GM12878 (cell line): ENCODE measurements at regions of chr6 and their contacts with region 1.

Region 1: DNA sequence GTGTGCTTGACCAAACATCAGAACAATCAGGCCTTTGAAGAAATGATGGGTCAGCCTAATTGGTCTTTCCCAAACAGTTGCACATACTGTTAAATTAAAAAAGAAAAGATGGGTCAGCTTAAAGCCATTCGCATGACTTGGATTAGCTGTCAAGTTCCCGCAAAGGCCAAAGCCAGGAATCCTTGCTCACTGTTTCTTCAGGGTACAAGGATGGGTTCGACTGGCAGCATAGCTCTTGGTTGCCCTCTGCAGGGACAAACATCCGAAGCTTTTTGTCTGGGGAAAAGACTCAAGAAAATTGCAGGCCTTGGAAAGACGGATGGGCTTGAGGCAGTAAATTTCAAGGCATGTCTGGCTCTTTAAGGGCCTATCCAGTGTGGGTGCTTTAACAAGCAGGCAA is 168.0 kb downstream of the HDGFL1 start:
- DNase-seq: peak; percentile 0
- ATAC-seq: no peak
- H3K4me3 ChIP-seq: no peak overlapping the region
- H3K27ac ChIP-seq: no peak overlapping the region
- H3K4me1 ChIP-seq: no peaks in the 10 kb centered on the region
- H3K27me3 ChIP-seq: no peaks in the 10 kb centered on the region
- CTCF ChIP-seq: peak; percentile 23 to 42 (median 40); a peak in 4 of 6 replicates
- EP300 ChIP-seq: no peak
- POLR2A ChIP-seq: no peak
- RAD21 ChIP-seq: peak; percentile 56

Region 2: GRCh38 chr6:22098601-22099031 is 638.7 kb before region 1 on chr6:
- CTCF ChIA-PET with region 1: no interaction called
- POLR2A ChIA-PET with region 1: no interaction called
- RAD21 ChIA-PET with region 1: no interaction called
- SMC1A ChIA-PET with region 1: no interaction called
- in situ Hi-C with region 1: no loop called
- intact Hi-C with region 1: no loop called
- DNase-seq: no peak
- ATAC-seq: no peak
- H3K4me3 ChIP-seq: no peak overlapping the region
- H3K27ac ChIP-seq: no peak overlapping the region
- H3K4me1 ChIP-seq: peaks cover 7% of the 10 kb centered on the region
- H3K27me3 ChIP-seq: no peaks in the 10 kb centered on the region
- CTCF ChIP-seq: no peak
- EP300 ChIP-seq: no peak
- POLR2A ChIP-seq: no peak
- RAD21 ChIP-seq: no peak

Region 3: DNA sequence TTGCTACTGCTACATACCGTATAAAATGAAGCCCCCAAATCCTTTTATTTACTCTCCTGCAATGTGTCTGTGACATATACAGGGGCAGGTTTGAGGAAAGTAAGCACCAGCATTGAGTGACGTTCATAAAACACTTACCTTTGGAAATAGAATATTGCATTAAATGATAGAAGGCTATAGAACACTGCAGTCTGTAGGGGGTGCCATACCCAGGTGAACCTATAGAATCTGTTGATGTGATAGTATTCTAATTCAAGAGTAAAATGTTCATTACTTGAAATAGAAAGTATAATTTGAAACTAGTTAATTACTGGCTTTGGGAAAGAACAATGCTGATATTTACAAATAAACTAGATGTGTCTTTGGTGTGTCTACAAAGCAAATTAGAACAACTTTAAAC is 393.5 kb before region 1 on chr6:
- CTCF ChIA-PET with region 1: interaction called, 5 read pairs
- POLR2A ChIA-PET with region 1: no interaction called
- RAD21 ChIA-PET with region 1: no interaction called
- SMC1A ChIA-PET with region 1: interaction called, 5 read pairs
- in situ Hi-C with region 1: no loop called
- intact Hi-C with region 1: loop called (anchors 2 kb)
- DNase-seq: no peak
- ATAC-seq: peak; percentile 39; the same call in 1 of the 3 replicates
- H3K4me3 ChIP-seq: no peak overlapping the region
- H3K27ac ChIP-seq: no peak overlapping the region
- H3K4me1 ChIP-seq: no peaks in the 10 kb centered on the region
- H3K27me3 ChIP-seq: no peaks in the 10 kb centered on the region
- CTCF ChIP-seq: peak in 1 of 3 experiments; percentile 14; a peak in 2 of 6 replicates
- EP300 ChIP-seq: no peak
- POLR2A ChIP-seq: no peak
- RAD21 ChIP-seq: peak; percentile 46; the same call in 1 of the 2 replicates

Region 4: DNA sequence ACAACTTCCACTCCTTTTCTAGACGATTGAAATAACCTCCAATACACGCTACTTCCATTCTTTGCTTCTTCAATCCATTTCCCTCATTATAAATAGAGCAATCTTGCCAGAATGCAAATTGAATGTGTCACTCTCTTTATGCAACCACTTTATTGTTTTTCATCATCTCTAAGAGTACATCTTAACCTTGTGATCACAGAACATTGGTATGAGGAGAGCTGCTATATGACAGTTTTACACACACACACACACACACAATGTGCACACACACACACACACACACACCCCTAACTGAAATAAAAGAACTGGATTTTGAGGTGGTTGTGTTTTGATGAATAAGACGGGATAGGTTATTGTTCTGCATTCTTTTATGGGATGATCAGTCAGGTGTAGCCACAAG is 19.0 kb after region 1 on chr6:
- CTCF ChIA-PET with region 1: no interaction called
- POLR2A ChIA-PET with region 1: no interaction called
- RAD21 ChIA-PET with region 1: no interaction called
- SMC1A ChIA-PET with region 1: no interaction called
- in situ Hi-C with region 1: no loop called
- intact Hi-C with region 1: no loop called
- DNase-seq: no peak
- ATAC-seq: no peak
- H3K4me3 ChIP-seq: no peak overlapping the region
- H3K27ac ChIP-seq: no peak overlapping the region
- H3K4me1 ChIP-seq: no peaks in the 10 kb centered on the region
- H3K27me3 ChIP-seq: no peaks in the 10 kb centered on the region
- CTCF ChIP-seq: no peak
- EP300 ChIP-seq: no peak
- POLR2A ChIP-seq: no peak
- RAD21 ChIP-seq: no peak

Region 5: GRCh38 chr6:23269436-23269835 is 532.1 kb after region 1 on chr6:
- CTCF ChIA-PET with region 1: no interaction called
- POLR2A ChIA-PET with region 1: no interaction called
- RAD21 ChIA-PET with region 1: no interaction called
- SMC1A ChIA-PET with region 1: no interaction called
- in situ Hi-C with region 1: no loop called
- intact Hi-C with region 1: no loop called
- DNase-seq: no peak
- ATAC-seq: no peak
- H3K4me3 ChIP-seq: no peak overlapping the region
- H3K27ac ChIP-seq: no peak overlapping the region
- H3K4me1 ChIP-seq: no peaks in the 10 kb centered on the region
- H3K27me3 ChIP-seq: no peaks in the 10 kb centered on the region
- CTCF ChIP-seq: no peak
- EP300 ChIP-seq: no peak
- POLR2A ChIP-seq: no peak
- RAD21 ChIP-seq: no peak